Endothelial cell of umbilical vein (primary cell): ENCODE measurements at regions of chr5 and their contacts with region 1.

Region 1: DNA sequence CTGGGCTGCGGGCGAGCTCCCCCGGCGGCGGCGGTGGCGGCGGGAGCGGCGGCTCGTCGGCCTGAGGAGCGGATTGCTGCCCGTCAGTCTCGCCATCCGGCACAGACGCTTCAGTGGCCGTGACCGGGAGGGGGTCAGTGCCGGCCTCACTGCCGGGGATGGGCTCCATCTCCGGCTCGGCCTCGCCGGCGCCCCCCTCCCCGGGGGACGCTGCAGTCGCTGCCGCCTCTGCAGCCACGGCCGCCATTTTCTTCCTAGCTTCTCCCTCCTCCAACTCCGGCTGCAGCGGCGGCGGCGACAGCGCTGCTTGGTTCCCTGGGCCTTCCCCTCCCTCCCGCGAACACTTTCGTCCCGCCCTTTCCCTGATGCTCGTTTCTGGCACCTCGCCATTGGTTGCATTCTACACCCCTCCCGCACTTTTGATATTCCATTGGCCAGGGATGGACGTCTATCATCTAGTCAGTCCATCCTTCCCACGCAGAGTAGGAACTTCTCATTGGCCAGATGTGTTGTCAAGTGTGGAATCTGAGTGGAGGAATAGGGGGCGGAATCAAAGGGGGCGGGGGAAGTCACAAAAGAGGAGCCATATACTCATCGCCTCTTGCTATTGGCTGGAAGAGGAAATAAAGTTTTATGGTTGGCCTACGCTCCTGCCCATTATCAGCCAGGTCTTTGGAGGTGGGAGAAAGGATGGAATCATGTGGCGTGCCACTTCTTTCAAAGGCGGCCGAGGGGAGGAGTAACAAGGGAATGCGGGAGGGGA is at the start of gene PWWP2A:
- DNase-seq: peak; percentile 100
- H3K4me3 ChIP-seq: peak within 1 kb of the TSS; percentile 71 to 88 (median 73)
- H3K27ac ChIP-seq: peak within 1 kb of the TSS; percentile 56
- H3K4me1 ChIP-seq: peaks cover 6% of the 10 kb centered on the region
- H3K27me3 ChIP-seq: peaks cover 2 to 4% of the 10 kb centered on the region in 2 experiments
- CTCF ChIP-seq: peak; percentile 14 to 21
- POLR2A ChIP-seq: peak; percentile 86
- total RNA-seq, gene PWWP2A: 17.3 and 19.3 TPM in 2 replicates

Region 2: DNA sequence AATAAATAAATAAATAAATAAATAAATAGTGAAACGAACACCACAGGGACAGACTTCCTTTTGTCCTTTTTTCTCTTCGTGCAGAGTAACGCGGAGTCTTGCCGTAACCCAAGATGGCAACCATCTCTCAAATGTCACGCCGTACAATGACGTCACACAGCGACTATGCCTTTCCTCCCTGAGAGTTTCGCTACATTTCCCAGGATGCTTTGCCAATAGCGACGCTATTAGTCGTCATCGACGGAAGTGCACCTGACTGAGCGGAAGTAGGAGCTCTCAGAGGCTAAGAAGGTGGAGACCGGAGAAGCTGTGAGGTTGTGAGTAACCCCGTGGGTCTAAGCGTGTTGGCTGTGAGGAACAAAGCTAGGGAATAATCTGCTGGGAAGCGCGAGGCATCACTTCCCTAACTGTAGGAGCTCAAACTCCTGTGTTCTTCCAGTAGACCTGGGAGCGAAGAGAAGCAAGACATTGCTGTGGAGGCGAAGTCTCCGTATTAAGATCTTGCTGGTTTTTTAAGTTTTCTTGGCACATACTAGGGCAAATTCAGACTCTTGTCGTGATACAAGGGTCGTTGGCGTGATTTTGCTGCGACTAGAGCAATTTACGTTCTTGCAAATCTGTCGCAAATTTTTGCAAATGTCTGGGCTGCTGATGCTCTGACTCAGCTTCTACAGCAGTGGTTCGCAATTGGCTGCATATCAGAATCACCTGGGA is 110.3 kb before region 1 on chr5 and contains the start of gene TTC1:
- CTCF ChIA-PET with region 1: no interaction called
- POLR2A ChIA-PET with region 1: interaction called, 3 read pairs
- dilution Hi-C with region 1: no loop called
- intact Hi-C with region 1: loop called (anchors 1 kb)
- DNase-seq: peak; percentile 98
- H3K4me3 ChIP-seq: peak within 1 kb of the TSS; percentile 62 to 97 (median 93)
- H3K27ac ChIP-seq: peak within 1 kb of the TSS; percentile 89
- H3K4me1 ChIP-seq: peaks cover 13% of the 10 kb centered on the region
- H3K27me3 ChIP-seq: peaks cover 0 to 3% of the 10 kb centered on the region in 2 experiments
- CTCF ChIP-seq: no peak
- POLR2A ChIP-seq: peak; percentile 95
- total RNA-seq, gene TTC1: 59.6 and 62.6 TPM in 2 replicates

Region 3: DNA sequence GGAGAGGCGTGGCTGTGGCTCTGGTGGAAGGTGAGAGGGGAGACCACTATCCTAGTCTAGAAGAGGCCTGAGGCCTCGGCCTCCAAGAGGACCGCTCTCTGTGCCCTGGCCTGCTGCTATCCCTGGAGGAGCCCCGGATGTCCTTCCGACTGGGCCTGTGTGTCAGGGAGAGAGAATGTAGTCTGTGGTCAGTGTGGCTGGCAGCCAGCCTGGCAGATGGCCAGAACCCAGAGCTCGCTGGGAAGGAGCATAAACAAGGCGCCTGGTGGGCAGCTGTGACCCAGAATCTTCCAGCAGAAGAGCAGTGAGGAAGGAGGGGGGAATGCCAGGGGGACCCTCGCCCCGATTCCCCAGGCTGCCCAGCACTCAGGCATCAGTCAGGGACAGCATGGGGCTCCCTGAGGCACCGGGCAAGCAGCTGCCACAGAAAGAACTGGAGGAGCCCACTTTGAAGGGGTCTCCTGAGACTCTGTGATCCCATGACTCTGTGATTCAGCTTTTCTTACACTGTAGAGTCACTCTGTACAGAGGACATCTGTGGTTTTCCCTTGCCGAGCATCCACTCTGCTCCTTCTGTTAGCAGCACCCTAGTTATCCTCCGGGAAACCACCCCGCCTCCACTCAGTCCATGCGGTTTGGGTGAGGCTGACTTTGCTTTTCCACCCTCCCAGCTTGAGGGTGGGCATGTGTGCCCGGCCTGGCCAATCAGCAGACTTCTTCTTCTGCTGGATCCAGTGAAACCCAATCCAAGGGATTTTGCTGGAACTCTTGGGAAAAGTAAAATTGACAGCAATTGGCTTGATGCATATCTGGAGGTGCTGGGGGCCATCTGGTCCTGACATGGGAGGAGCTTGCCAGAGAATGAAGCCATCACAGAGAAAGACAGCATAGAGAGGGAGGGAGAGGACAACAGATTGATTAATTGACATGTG is 46.1 kb after region 1 on chr5:
- CTCF ChIA-PET with region 1: interaction called, 3 read pairs
- POLR2A ChIA-PET with region 1: no interaction called
- dilution Hi-C with region 1: no loop called
- intact Hi-C with region 1: loop called (anchors 1 kb)
- DNase-seq: peak; percentile 86
- H3K4me3 ChIP-seq: no peak overlapping the region
- H3K27ac ChIP-seq: peak overlapping the region; percentile 89
- H3K4me1 ChIP-seq: peaks cover 44% of the 10 kb centered on the region
- H3K27me3 ChIP-seq: no peaks in the 10 kb centered on the region
- CTCF ChIP-seq: no peak
- POLR2A ChIP-seq: peak; percentile 73

Region 4: GRCh38 chr5:160199410-160199911 is 80.1 kb after region 1 on chr5:
- CTCF ChIA-PET with region 1: interaction called, 4 read pairs
- POLR2A ChIA-PET with region 1: no interaction called
- dilution Hi-C with region 1: no loop called
- intact Hi-C with region 1: loop called (anchors 1 kb)
- DNase-seq: peak; percentile 42
- H3K4me3 ChIP-seq: peak overlapping the region in 1 of 3 experiments; percentile 35
- H3K27ac ChIP-seq: no peak overlapping the region
- H3K4me1 ChIP-seq: peaks cover 12% of the 10 kb centered on the region
- H3K27me3 ChIP-seq: no peaks in the 10 kb centered on the region
- CTCF ChIP-seq: peak; percentile 85 to 93
- POLR2A ChIP-seq: no peak

Region 5: DNA sequence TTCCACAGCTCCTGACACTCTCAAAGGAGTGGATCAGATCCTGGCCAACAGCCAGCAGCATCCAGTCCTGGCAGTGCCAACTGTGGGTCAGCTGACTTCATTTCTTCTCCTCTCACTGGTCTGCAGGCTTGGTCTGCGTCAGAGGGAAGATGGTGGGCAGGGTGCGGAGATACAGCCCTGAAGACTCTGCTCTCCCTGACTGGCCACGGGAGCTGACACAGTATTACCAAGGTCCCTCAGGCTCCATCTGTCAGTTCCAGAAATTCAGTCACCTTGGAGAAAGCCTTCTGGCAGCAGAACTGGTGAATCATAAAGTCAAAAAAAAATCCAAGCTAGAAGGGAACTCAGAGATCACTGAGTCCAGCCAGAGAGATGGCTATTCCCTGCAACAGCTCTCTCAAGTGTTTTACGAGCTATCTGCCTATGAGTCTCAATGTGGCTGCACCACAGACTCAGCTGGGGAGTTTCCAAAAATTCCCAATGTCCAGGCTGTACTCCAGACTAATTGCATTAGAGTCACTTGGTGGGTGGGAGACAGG is 223.1 kb after region 1 on chr5:
- CTCF ChIA-PET with region 1: interaction called, 3 read pairs
- POLR2A ChIA-PET with region 1: no interaction called
- dilution Hi-C with region 1: no loop called
- intact Hi-C with region 1: loop called (anchors 1 kb)
- DNase-seq: no peak
- H3K4me3 ChIP-seq: no peak overlapping the region
- H3K27ac ChIP-seq: no peak overlapping the region
- H3K4me1 ChIP-seq: no peaks in the 10 kb centered on the region
- H3K27me3 ChIP-seq: no peaks in the 10 kb centered on the region
- CTCF ChIP-seq: no peak
- POLR2A ChIP-seq: no peak